Cardiac septum (tissue), 1 donor: ENCODE measurements at regions of chr12 and their contacts with region 1.

Region 1: DNA sequence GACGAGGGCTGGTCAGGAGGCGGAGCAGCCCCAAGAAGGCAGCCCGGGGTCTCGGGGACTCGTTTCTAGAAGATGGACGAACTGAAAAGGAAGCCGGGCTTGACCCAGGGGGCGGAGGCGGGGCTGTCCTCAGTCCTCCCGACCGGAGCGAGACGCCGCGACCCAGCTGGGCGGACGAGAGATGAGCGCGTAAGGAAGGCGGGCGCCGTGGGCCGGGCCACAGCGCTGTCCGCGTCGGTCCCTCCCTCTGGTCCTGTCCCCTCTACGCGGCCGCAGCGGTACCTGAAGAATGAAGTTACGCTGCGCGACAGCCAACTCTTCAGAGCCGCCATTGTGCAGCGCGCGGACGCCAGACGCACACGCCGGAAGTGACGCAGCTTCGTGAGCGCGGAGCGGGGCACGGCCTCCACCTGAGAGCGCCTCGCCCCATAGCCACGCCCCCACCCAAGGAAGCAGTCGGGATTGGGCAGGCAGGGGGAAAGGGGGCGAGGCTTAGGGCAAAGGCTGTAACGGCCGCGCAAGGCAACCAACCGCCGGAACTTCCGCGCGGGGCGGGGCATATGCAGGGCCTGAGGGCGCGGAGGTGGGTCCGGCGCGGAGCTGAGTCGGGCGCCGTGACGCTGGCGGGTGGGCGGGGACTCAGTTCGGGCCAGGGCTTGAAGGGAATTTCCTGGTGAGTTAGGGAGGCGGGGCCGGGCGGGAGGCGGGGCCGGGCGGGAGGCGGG is at the start of gene DIABLO:
- DNase-seq: peak; percentile 100
- total RNA-seq, gene DIABLO: 30.9 TPM

Region 2: DNA sequence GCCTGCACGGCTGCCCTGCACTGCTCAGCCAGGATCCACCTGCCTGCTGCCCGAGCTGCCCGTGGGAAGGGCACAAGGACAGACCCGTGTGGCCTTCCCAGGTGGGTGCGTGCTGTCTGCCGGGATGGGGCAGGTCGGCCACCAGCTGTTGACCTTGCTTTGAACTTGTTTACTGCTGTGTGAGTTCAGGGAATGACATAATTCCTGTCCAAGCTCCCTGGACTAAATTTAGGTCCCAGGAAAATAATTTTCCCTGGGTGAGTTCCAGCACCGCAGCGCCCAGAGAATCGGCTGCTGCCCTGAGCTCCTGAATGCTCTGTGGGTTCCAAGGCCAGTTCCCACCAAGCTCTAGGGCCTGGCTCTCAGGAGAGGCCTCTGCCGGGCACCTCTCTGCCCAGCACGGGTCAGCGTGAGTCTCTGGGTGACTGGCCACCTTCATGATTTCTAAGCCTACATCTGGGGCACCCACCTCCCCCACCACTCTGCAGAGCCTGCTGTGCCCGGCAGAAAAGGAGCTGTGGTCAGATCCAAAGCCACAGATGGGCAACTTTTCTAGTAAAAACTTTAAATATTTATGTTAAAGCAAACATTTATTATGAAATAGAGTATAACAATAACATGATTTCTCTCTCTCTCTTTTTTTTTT is 174.5 kb before region 1 on chr12:
- intact Hi-C with region 1: loop called (anchors 10 kb)
- DNase-seq: peak; percentile 88

Region 3: GRCh38 chr12:122265931-122266771 is 40.3 kb after region 1 on chr12 and contains the start of gene VPS33A:
- intact Hi-C with region 1: loop called (anchors 5 kb)
- DNase-seq: peak; percentile 96
- total RNA-seq, gene VPS33A: 9.2 TPM